Mammary epithelial cell (primary cell): ENCODE measurements at regions of chr12 and their contacts with region 1.

Region 1: GRCh38 chr12:66409195-66409871 is 107.0 kb downstream of the HELB start:
- DNase-seq: peak; percentile 41
- H3K4me3 ChIP-seq: no peak overlapping the region
- H3K27ac ChIP-seq: no peak overlapping the region
- H3K4me1 ChIP-seq: peaks cover 9% of the 10 kb centered on the region
- H3K27me3 ChIP-seq: no peaks in the 10 kb centered on the region
- CTCF ChIP-seq: peak; percentile 43 to 71

Region 2: GRCh38 chr12:66107451-66107915 is 301.9 kb before region 1 on chr12:
- CTCF ChIA-PET with region 1: no interaction called
- dilution Hi-C with region 1: no loop called
- in situ Hi-C with region 1: no loop called
- intact Hi-C with region 1: loop called (anchors 1 kb)
- DNase-seq: peak; percentile 91
- H3K4me3 ChIP-seq: no peak overlapping the region
- H3K27ac ChIP-seq: no peak overlapping the region
- H3K4me1 ChIP-seq: peaks cover 6% of the 10 kb centered on the region
- H3K27me3 ChIP-seq: no peaks in the 10 kb centered on the region
- CTCF ChIP-seq: peak; percentile 69 to 75

Region 3: GRCh38 chr12:66144791-66145754 is 264.3 kb before region 1 on chr12:
- CTCF ChIA-PET with region 1: no interaction called
- dilution Hi-C with region 1: no loop called
- in situ Hi-C with region 1: loop called in 1 of 2 experiments (anchors 25 kb)
- intact Hi-C with region 1: loop called (anchors 2 kb)
- DNase-seq: peak; percentile 55
- H3K4me3 ChIP-seq: no peak overlapping the region
- H3K27ac ChIP-seq: no peak overlapping the region
- H3K4me1 ChIP-seq: no peaks in the 10 kb centered on the region
- H3K27me3 ChIP-seq: no peaks in the 10 kb centered on the region
- CTCF ChIP-seq: peak; percentile 76

Region 4: GRCh38 chr12:66279123-66279712 is 130.1 kb before region 1 on chr12:
- CTCF ChIA-PET with region 1: no interaction called
- dilution Hi-C with region 1: no loop called
- in situ Hi-C with region 1: loop called (anchors 5 kb)
- intact Hi-C with region 1: loop called (anchors 1 kb)
- DNase-seq: no peak
- H3K4me3 ChIP-seq: no peak overlapping the region
- H3K27ac ChIP-seq: no peak overlapping the region
- H3K4me1 ChIP-seq: peaks cover 5% of the 10 kb centered on the region
- H3K27me3 ChIP-seq: no peaks in the 10 kb centered on the region
- CTCF ChIP-seq: peak; percentile 87 to 90

Region 5: GRCh38 chr12:66309606-66310005 is 99.7 kb before region 1 on chr12:
- CTCF ChIA-PET with region 1: no interaction called
- dilution Hi-C with region 1: no loop called
- in situ Hi-C with region 1: no loop called
- intact Hi-C with region 1: no loop called
- DNase-seq: no peak
- H3K4me3 ChIP-seq: no peak overlapping the region
- H3K27ac ChIP-seq: no peak overlapping the region
- H3K4me1 ChIP-seq: no peaks in the 10 kb centered on the region
- H3K27me3 ChIP-seq: no peaks in the 10 kb centered on the region
- CTCF ChIP-seq: no peak

Region 6: DNA sequence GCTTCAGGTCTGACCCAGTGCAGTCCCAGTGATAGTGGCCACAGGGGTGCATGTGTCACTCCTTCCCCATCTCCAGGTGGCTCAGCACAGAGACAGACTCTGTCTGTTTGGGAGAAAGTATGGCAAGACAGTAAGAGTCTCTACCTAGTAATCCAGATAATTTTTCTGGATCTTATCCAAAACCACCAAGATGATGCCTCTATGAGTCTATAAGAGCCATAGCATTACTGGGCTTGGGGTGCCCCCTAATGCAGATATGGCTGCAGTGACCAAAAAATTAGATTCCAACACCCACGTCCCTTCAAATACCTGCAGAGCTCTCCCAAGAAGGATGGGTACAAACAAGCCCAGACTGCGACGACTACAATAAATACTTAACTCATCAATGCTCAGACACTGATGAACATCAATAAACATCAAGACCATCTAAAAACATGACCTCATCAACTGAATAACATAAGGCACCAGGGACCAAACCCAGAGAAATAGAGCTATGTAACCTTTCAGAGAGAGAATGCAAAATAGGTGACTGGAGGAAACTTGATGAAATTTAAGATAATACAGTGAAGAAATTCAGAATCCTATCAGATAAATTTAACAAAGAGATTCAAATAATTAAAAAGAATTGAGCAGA is 145.9 kb after region 1 on chr12:
- CTCF ChIA-PET with region 1: no interaction called
- dilution Hi-C with region 1: no loop called
- in situ Hi-C with region 1: no loop called
- intact Hi-C with region 1: loop called (anchors 5 kb)
- DNase-seq: peak; percentile 78
- H3K4me3 ChIP-seq: no peak overlapping the region
- H3K27ac ChIP-seq: no peak overlapping the region
- H3K4me1 ChIP-seq: peaks cover 3% of the 10 kb centered on the region
- H3K27me3 ChIP-seq: no peaks in the 10 kb centered on the region
- CTCF ChIP-seq: peak; percentile 27 to 38